Activated T-helper 1 cell treated with anti-CD3 and anti-CD28 coated beads, Interleukin-12 subunit alpha, Interleukin-12 subunit beta, Interleukin-2, Interleukin-4 antibody, amounts not matched to agents 30 ng/mL and 10 ng/mL and 1 ng/mL, durations not matched to agents 14 hours and 24 hours and 36 hours (primary cell): ENCODE measurements at regions of chr16 and their contacts with region 1.

Region 1: DNA sequence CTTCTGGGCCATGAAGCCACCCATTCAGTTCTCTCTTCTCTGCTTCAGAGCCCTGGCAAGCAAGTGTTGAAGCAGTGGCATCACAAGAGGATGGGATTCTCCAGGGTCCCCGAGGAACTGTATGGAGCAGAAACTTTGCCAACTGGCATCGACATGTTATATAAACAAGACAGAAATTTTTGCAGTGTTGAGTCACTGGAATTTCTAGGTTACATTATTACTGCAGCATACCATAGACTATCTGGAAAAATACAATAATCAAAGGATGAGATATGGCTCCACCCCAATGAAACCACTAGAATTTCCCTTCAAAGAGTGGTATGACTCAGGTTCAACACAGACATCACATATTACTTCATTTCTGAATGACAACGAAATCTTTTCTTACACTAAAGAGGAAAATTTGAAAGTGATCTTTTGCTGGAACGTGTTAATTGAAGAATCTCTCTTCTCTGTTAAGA is 343.0 kb upstream of the DYNLRB2 start:
- DNase-seq: no peak
- H3K4me3 Mint-ChIP-seq: no peak overlapping the region
- H3K27ac Mint-ChIP-seq: peak overlapping the region; percentile 33
- H3K4me1 Mint-ChIP-seq: peaks cover 4% of the 10 kb centered on the region
- H3K27me3 Mint-ChIP-seq: no peaks in the 10 kb centered on the region

Region 2: DNA sequence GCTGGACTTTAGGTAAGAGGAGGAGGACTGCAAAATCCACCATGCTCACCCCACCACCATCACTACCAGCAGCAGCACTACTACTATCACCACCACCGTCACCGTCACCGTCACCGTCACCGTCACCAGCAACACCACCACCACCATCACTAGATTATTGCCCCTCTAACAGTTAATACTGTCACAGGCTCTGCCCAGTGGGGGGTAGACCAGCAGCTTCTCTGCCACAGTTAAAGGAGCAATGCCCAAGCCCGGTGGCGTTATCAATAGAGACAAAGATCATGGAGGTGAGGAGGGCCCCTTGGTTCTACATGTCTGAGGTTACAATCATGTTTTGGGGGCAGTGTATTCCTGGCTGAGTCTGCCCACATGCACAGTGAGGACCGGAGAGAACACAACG is 158.6 kb after region 1 on chr16:
- intact Hi-C with region 1: no loop called
- DNase-seq: no peak
- H3K4me3 Mint-ChIP-seq: no peak overlapping the region
- H3K27ac Mint-ChIP-seq: no peak overlapping the region
- H3K4me1 Mint-ChIP-seq: no peaks in the 10 kb centered on the region
- H3K27me3 Mint-ChIP-seq: no peaks in the 10 kb centered on the region

Region 3: DNA sequence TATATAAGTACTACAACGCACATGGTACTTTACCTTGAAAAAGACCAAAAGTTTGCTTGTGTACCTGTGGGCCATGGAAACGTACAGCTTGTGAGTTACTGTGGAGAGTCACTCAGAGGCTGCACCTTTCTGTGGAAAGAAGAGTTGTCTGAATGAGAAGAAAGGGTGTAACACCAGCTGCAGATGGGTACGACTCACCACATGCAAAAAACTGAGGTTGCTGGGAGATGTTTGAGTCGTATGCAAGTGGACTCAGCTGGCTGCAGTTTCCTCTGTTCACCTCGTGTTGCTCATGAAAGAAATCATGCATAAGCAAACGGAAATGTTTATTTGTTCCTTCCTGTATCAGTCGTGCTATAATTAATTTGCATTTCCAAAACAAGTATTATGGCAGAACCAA is 320.7 kb after region 1 on chr16:
- intact Hi-C with region 1: loop called (anchors 5 kb)
- DNase-seq: peak; percentile 44
- H3K4me3 Mint-ChIP-seq: peak overlapping the region; percentile 69
- H3K27ac Mint-ChIP-seq: no peak overlapping the region
- H3K4me1 Mint-ChIP-seq: peaks cover 21% of the 10 kb centered on the region
- H3K27me3 Mint-ChIP-seq: peaks cover 6% of the 10 kb centered on the region